Adrenal gland (tissue), 19 donors: ENCODE measurements at regions of chr5 and their contacts with region 1.

Region 1: DNA sequence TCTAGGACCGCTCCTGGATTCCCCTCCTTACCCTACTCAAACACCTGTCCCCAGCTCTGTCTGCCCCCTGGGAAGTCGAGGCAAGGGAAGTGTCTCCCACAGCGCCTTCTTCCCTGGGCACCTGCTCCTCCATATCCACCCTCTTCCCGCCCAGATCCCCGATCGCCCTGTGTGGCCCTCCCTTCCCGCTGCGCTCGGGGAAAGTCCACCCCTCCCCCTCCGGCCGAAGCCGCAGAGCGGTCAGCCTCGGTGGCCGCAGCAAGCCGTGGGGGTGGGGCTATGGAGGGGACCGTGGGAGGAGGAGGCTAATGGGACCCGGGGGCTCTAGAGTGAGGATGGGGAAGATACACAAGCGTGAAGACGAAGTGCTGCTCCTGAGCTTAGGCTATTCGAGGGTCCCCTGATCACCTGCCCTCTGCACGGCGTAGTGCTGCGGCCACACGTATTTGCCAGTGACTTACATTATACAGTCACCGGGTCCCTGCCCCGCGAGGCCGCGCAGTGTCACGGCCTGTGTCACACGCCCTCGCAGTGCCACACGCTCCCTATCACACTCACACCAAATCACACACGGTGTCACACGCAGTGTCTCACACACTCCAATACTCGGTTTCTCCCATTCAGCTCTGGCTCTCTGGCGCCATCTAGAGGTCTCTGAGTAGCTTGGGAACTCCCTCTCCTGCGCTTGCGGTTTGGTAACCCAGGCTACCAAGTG is 658 bp upstream of the PCDH1 start:
- DNase-seq: peak; percentile 89 to 97 (median 92)
- H3K4me3 ChIP-seq: peak overlapping the region in 2 of 4 donors; percentile 10 to 71
- H3K27ac ChIP-seq: peak overlapping the region in 2 of 5 donors; percentile 51 to 78
- H3K4me1 ChIP-seq: peaks cover 23 to 47% of the 10 kb centered on the region in 2 donors
- H3K27me3 ChIP-seq: peaks cover 24% of the 10 kb centered on the region
- CTCF ChIP-seq: peak; percentile 93 to 99 (median 96)
- POLR2A ChIP-seq: no peak

Region 2: GRCh38 chr5:141691867-141692532 is 186.9 kb before region 1 on chr5:
- intact Hi-C with region 1: loop called in 1 of 2 experiments (anchors 5 kb)
- DNase-seq: peak; percentile 74 to 94 (median 86)
- H3K4me3 ChIP-seq: peak overlapping the region in 1 of 4 donors; percentile 25
- H3K27ac ChIP-seq: no peak overlapping the region
- H3K4me1 ChIP-seq: peaks cover 0 to 4% of the 10 kb centered on the region in 2 donors
- H3K27me3 ChIP-seq: peaks cover under 1% of the 10 kb centered on the region
- CTCF ChIP-seq: peak; percentile 95 to 99 (median 98)
- POLR2A ChIP-seq: no peak

Region 3: DNA sequence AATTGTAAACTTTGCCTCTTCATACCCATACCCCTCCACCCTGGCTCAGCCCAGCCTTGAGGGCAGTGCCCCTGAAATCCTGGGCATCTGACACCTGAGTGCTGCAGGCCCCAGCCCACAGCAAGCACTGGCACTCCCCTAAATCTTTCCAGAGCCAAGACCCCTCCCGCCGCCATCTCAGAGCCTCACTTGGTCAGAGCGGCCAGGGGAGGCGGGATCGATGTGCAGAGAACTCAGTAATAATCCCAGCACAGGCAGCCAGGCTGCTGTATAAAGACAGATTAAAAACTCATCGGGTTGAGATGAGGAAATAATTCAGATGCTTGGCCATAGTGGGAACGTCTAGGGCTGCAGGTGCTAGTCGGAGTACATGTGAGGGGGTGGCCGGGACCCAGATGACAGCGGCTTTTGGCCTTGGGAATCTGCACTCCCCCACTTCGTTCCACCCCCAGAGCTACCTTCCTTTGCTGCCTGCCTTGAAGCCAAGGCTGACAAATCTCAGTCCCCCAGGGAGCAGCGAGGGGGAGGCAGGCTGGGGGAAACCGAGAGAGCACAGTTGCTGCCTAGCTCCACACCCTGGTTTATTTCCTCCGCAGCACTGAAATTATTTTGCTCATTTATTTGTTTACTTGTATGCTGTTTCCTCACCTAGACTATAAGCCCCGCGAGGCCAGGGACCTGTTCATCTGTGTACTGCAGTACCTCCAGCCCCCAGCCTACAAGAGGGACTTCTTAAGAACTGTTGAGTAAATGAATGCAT is 177.3 kb before region 1 on chr5:
- intact Hi-C with region 1: loop called (anchors 5 kb)
- DNase-seq: no peak
- H3K4me3 ChIP-seq: no peak overlapping the region
- H3K27ac ChIP-seq: no peak overlapping the region
- H3K4me1 ChIP-seq: peaks cover 0 to 11% of the 10 kb centered on the region in 2 donors
- H3K27me3 ChIP-seq: peaks cover 28% of the 10 kb centered on the region
- CTCF ChIP-seq: no peak
- POLR2A ChIP-seq: no peak

Region 4: GRCh38 chr5:141742866-141743851 is 135.7 kb before region 1 on chr5:
- intact Hi-C with region 1: no loop called
- DNase-seq: peak in 6 of 7 donors; percentile 21 to 40 (median 32)
- H3K4me3 ChIP-seq: no peak overlapping the region
- H3K27ac ChIP-seq: no peak overlapping the region
- H3K4me1 ChIP-seq: no peaks in the 10 kb centered on the region
- H3K27me3 ChIP-seq: no peaks in the 10 kb centered on the region
- CTCF ChIP-seq: no peak
- POLR2A ChIP-seq: no peak

Region 5: DNA sequence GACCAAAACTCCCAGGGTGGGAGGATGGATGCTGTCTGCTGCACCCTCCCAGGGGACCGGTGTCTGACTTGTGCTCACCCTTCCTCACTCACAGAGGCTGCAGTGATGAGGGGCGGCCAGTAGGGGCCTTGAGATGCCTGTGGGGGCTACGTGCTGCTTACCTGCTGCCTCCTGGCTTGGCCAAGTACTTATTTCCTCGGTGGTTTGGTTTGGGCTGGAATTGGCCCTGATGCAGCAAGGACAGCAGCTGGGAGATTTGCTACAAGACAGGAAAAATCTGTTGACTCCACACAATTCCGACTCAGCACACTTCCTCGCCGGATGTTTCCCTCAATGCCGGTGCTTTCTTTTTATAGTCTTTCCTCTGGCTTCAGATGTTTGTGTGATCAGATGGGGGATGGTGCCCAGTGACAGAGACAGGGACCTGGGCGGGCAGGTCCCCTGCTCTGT is 72.5 kb after region 1 on chr5:
- intact Hi-C with region 1: loop called (anchors 5 to 10 kb)
- DNase-seq: peak in 1 of 7 donors; percentile 28
- H3K4me3 ChIP-seq: no peak overlapping the region
- H3K27ac ChIP-seq: peak overlapping the region in 3 of 5 donors; percentile 17 to 69 (median 18)
- H3K4me1 ChIP-seq: peaks cover 0 to 22% of the 10 kb centered on the region in 2 donors
- H3K27me3 ChIP-seq: no peaks in the 10 kb centered on the region
- CTCF ChIP-seq: peak in 2 of 6 experiments; percentile 21 to 24
- POLR2A ChIP-seq: no peak

Region 6: DNA sequence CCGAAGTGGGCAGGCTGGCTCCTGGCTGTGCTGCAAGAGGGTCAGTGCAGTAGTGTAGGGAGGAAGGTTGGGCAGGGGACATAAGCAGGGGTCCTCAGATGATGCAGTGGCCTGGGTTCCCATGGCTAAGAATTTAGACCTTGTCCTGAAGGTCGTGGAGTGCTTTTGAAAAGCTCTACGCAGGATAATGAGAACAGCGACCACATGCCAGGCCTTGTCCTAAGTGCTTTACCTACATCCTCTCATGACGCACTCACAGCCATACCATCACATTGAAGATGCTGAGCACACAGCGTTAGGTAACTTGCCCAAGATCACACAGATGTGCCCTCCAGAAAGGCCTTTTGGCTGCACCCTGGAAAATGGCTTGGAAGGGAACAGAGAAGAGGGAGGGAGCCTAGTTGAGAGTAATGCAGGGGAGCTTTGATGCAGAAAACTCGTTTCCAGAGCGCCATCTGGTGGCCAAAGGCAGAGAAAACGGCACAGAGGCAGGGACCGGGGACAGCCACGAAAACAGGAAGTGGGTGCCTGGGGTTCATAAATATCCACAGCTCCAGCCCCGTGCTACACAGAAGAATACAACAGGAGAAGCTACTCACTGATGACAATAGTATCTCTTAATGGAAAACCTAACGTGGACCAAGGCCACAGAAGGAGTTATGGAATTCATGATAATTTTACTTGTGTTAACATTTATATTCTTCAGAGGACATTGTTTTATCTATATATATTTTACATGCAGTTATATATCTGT is 81.8 kb after region 1 on chr5:
- intact Hi-C with region 1: loop called (anchors 5 to 10 kb)
- DNase-seq: peak; percentile 86 to 96 (median 88)
- H3K4me3 ChIP-seq: no peak overlapping the region
- H3K27ac ChIP-seq: no peak overlapping the region
- H3K4me1 ChIP-seq: peaks cover 0 to 12% of the 10 kb centered on the region in 2 donors
- H3K27me3 ChIP-seq: no peaks in the 10 kb centered on the region
- CTCF ChIP-seq: peak; percentile 76 to 92 (median 88)
- POLR2A ChIP-seq: no peak